GM10248 (cell line): ENCODE measurements at regions of chr12 and their contacts with region 1.

Region 1: GRCh38 chr12:7933255-7933729 is 2.7 kb downstream of the SLC2A3 start:
- DNase-seq: peak; percentile 87
- CTCF ChIP-seq: peak; percentile 55

Region 2: GRCh38 chr12:7916936-7917335 is 16.4 kb before region 1 on chr12:
- CTCF ChIA-PET with region 1: interaction called, 18 read pairs
- POLR2A ChIA-PET with region 1: interaction called, 11 read pairs
- DNase-seq: no peak
- CTCF ChIP-seq: no peak

Region 3: DNA sequence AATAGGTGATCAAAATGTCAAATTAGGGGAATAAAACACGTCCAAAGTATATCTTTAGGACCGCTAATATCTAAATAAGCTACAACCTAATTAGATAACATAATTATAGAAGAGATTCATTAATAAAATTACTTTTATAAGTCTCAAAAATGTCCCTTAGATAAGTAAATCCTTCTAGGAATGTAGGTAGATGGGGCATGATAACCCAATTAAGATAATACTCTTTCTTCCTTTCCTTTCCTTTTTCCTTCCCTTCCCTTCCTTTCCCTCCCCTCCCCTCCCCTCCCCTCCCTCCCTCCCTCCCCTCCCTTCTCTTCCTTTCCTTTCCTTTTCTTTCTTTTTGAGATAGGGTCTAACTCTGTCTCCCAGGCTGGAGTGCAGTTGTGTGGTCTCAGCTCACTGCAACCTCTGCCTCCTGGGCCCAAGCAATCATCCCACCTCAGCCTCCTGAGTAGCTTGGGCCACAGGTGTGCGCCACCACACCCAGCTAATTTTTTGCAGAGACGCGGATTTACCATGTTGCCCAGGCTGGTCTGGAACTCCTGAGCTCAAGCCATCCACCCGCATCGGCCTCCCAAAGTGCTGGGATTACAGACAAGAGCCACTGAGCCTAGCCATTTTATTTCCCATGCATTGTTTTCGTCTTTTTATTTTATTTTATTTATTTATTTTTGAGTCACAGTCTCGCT is 13.9 kb after region 1 on chr12:
- CTCF ChIA-PET with region 1: interaction called, 11 read pairs
- POLR2A ChIA-PET with region 1: interaction called, 6 read pairs
- DNase-seq: no peak
- CTCF ChIP-seq: no peak

Region 4: GRCh38 chr12:7959701-7960121 is 26.4 kb after region 1 on chr12:
- CTCF ChIA-PET with region 1: interaction called, 38 read pairs
- POLR2A ChIA-PET with region 1: interaction called, 63 read pairs
- DNase-seq: peak; percentile 38
- CTCF ChIP-seq: no peak

Region 5: GRCh38 chr12:7970475-7971252 is 37.4 kb after region 1 on chr12:
- CTCF ChIA-PET with region 1: interaction called, 14 read pairs
- POLR2A ChIA-PET with region 1: interaction called, 8 read pairs
- DNase-seq: peak; percentile 87
- CTCF ChIP-seq: no peak

Region 6: GRCh38 chr12:7984900-7985299 is 51.6 kb after region 1 on chr12:
- CTCF ChIA-PET with region 1: interaction called, 10 read pairs
- POLR2A ChIA-PET with region 1: no interaction called
- DNase-seq: no peak
- CTCF ChIP-seq: no peak

Region 7: GRCh38 chr12:7995266-7995963 is 62.1 kb after region 1 on chr12:
- CTCF ChIA-PET with region 1: interaction called, 35 read pairs
- POLR2A ChIA-PET with region 1: interaction called, 9 read pairs
- DNase-seq: peak; percentile 66
- CTCF ChIP-seq: peak; percentile 66